ENCODE measurements at regions of chrX and their contacts with region 1.

Region 1: GRCh38 chrX:141405842-141406492 is 163.7 kb upstream of the SPANXC start:
- DNase-seq: no peak
- H3K4me3 ChIP-seq: no peak overlapping the region
- H3K27ac ChIP-seq: peak overlapping the region; percentile 89
- H3K4me1 ChIP-seq: peaks cover 20% of the 10 kb centered on the region
- H3K27me3 ChIP-seq: no peaks in the 10 kb centered on the region
- CTCF ChIP-seq: no peak
- POLR2A ChIP-seq: no peak

Region 2: DNA sequence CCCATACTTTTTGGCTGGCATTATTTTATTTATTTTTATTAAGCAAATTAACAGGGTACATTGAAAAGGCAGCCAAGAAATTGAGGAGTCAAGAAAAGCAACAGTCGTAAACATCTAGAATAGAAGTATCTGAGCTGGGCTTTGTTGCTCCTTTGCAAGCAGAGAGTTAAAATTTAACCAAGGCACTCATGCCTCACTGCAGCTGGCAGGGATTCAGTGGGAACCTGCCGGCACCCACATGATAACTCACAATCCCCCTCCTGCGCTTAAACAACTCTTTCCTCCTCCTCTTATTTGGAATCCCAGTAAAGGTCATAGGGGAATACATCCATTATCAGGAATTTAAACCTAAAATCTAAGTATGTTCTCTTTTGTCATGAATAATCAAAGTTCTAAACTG is 1016.6 kb before region 1 on chrX:
- CTCF ChIA-PET with region 1: no interaction called
- POLR2A ChIA-PET with region 1: no interaction called
- dilution Hi-C with region 1: no loop called
- intact Hi-C with region 1: no loop called
- DNase-seq: no peak
- H3K4me3 ChIP-seq: no peak overlapping the region
- H3K27ac ChIP-seq: no peak overlapping the region
- H3K4me1 ChIP-seq: no peaks in the 10 kb centered on the region
- H3K27me3 ChIP-seq: no peaks in the 10 kb centered on the region
- CTCF ChIP-seq: no peak
- POLR2A ChIP-seq: no peak

Region 3: DNA sequence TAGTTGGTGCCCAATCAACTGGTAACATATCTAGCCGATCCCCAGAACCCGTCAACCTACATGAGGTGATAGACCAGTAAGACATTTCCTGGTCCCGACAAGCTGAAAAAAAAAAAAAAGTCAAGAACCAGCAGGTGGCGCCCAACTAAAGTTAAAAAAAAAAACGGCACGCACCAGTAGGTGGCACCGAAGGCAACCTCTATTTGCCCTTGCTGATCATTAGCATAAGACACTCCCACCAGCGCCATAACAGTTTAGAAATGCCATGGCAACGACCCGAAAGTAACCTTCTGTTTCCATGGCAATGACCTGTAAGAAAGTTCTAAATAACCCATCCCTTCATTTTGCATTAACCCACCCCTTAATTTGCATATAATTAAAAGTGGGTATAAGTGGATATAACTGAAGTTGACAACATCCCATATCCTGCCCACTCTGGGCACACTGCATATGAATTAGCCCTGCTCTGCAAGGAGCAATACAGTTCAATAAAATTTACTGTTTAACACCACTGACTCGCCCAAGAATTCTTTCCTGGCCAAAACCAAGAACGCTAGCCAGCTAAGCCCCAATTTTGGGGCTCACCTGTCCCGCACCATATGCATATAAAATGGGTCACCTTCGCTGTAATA is 487.4 kb before region 1 on chrX:
- CTCF ChIA-PET with region 1: interaction called, 4 read pairs
- POLR2A ChIA-PET with region 1: interaction called, 3 read pairs
- dilution Hi-C with region 1: no loop called
- intact Hi-C with region 1: loop called (anchors 1 kb)
- DNase-seq: peak; percentile 57
- H3K4me3 ChIP-seq: no peak overlapping the region
- H3K27ac ChIP-seq: peak overlapping the region; percentile 31
- H3K4me1 ChIP-seq: no peaks in the 10 kb centered on the region
- H3K27me3 ChIP-seq: no peaks in the 10 kb centered on the region
- CTCF ChIP-seq: peak; percentile 46 to 49
- POLR2A ChIP-seq: no peak

Region 4: GRCh38 chrX:141220344-141221035 is 185.5 kb before region 1 on chrX:
- CTCF ChIA-PET with region 1: no interaction called
- POLR2A ChIA-PET with region 1: no interaction called
- dilution Hi-C with region 1: no loop called
- intact Hi-C with region 1: loop called (anchors 1 kb)
- DNase-seq: peak; percentile 69
- H3K4me3 ChIP-seq: no peak overlapping the region
- H3K27ac ChIP-seq: peak overlapping the region; percentile 73
- H3K4me1 ChIP-seq: peaks cover 16% of the 10 kb centered on the region
- H3K27me3 ChIP-seq: no peaks in the 10 kb centered on the region
- CTCF ChIP-seq: no peak
- POLR2A ChIP-seq: no peak

Region 5: GRCh38 chrX:141341341-141341740 is 64.6 kb before region 1 on chrX:
- CTCF ChIA-PET with region 1: interaction called, 4 read pairs
- POLR2A ChIA-PET with region 1: no interaction called
- dilution Hi-C with region 1: no loop called
- intact Hi-C with region 1: loop called (anchors 1 kb)
- DNase-seq: peak; percentile 90
- H3K4me3 ChIP-seq: no peak overlapping the region
- H3K27ac ChIP-seq: peak overlapping the region; percentile 77
- H3K4me1 ChIP-seq: peaks cover 25% of the 10 kb centered on the region
- H3K27me3 ChIP-seq: no peaks in the 10 kb centered on the region
- CTCF ChIP-seq: no peak
- POLR2A ChIP-seq: no peak

Region 6: GRCh38 chrX:141455105-141455504 is 49.1 kb after region 1 on chrX:
- CTCF ChIA-PET with region 1: no interaction called
- POLR2A ChIA-PET with region 1: no interaction called
- dilution Hi-C with region 1: no loop called
- intact Hi-C with region 1: no loop called
- DNase-seq: no peak
- H3K4me3 ChIP-seq: no peak overlapping the region
- H3K27ac ChIP-seq: no peak overlapping the region
- H3K4me1 ChIP-seq: no peaks in the 10 kb centered on the region
- H3K27me3 ChIP-seq: no peaks in the 10 kb centered on the region
- CTCF ChIP-seq: no peak
- POLR2A ChIP-seq: no peak

Region 7: GRCh38 chrX:141960573-141960972 is 554.6 kb after region 1 on chrX:
- CTCF ChIA-PET with region 1: no interaction called
- POLR2A ChIA-PET with region 1: no interaction called
- dilution Hi-C with region 1: no loop called
- intact Hi-C with region 1: loop called (anchors 1 kb)
- DNase-seq: peak; percentile 6
- H3K4me3 ChIP-seq: no peak overlapping the region
- H3K27ac ChIP-seq: no peak overlapping the region
- H3K4me1 ChIP-seq: peaks cover 13% of the 10 kb centered on the region
- H3K27me3 ChIP-seq: no peaks in the 10 kb centered on the region
- CTCF ChIP-seq: no peak
- POLR2A ChIP-seq: no peak

Measured in endothelial cell of umbilical vein (primary cell).